ENCODE measurements at regions of chr22 and their contacts with region 1.

Region 1: DNA sequence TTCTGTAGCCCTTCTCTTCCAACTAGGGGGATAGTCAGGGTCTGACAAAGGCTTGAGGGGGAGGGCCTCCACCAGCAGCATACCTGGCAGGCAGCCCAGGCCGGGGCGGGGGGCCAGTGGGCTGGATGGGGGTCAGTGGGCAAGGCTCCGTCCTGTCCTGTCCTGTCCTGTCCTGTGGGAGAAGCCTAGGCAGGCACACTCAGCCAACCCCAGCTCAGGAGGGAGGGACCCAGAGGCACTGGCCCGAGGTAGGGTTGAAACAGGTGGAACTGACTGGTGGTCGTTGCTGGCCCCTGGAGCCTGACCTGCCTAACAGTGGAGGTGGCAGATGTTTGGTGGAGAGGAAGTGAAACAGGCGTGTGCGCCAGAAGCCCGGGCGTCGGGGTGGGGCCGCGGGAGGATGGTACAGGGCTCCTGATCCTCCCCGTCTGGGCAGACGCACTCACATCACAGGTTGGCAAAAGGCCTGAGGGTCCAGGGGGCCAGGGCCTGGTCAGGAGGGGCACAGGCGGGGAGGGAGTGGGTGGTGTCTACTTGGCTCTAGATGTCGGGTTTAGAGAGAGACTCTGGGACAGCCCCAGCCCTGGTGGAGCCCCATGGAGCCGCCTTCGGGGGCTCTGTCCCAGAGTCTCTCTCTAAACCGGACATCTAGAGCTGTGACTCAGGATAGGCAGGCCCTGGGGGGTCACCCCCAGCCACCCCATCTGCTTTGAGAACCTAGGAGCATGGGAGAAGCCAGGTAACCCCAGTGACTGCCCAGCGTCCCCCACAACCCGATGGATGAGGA is 32.5 kb upstream of the GRAMD4 start:
- DNase-seq: no peak

Region 2: DNA sequence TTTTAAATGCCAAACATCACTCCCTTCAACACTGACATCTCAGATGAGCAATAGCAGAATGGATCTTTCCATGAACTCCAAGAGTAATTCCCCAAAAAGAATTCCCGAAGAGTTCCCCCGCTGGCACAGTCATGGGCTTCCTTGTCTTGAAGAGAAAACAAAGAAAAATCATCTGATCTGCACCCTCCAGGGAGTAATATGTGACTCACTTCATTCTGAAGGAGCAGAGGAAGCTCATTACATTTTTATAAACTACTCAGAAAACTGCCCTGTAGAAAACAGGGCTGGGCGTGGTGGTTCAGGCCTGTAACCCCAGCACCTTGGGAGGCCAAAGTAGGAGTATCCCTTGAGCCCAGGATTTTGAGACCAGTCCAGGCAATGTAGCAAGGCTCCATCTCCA is 86.0 kb before region 1 on chr22:
- intact Hi-C with region 1: no loop called
- DNase-seq: no peak

Region 3: DNA sequence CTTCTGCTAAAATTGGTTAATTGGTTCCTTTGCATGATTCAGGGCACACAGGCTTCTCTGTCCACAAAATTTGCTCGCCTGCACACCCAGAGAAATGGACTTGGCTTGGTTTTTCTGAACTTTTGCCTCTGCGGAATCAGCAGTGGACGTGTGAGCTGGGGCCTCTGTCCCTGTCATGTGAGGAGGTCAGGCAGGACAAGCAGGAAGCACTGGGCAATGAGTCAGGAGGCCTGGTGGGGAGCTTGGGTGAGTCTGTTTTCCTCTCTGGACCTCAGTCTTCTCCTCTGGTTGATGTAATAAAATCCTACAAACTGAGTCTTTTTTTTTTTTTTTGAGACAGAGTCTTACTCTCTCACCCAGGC is 39.8 kb before region 1 on chr22:
- intact Hi-C with region 1: loop called (anchors 2 kb)
- DNase-seq: peak; percentile 87

Region 4: DNA sequence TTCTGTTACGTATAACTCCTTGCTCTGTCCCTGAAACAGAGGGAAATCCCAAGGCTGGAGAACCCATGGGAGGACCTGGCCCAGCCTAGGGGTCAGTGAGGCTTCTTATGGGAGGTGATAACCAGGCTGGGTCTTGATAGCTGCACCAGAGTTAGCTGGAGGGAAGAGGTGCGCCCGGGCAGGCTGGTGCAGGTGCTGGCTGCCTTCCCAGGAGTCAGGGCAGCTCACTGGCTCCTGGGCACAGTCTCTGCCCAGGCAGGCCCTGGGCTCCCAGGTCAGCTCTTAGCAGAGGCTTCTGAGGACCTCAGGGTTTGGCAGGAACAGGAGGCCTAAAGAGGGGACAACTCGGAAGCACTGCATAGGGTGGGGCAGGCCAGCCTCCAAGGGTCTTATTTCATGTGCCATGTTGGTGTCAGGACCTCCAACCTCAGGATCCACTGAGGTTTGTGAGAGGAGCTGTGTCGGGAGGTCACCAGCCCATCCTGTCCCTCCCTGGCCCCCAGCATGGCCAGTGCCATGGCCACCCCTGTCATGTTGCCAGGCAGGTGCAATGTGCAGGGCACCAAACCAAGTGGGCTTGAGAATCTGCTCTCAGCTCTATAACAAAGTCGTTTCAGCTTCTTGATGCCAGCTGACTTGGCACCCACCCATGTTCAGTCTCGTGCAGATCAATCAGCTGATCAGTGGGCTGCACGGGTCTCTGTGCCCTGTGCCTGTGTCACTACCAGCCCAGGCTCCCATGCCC is 29.8 kb before region 1 on chr22:
- intact Hi-C with region 1: no loop called
- DNase-seq: no peak

Measured in cardiac septum (tissue), 1 donor.